T-cell (primary cell): ENCODE measurements at regions of chr14 and their contacts with region 1.

Region 1: GRCh38 chr14:81990312-81990761 is 456.7 kb upstream of the SEL1L start:
- DNase-seq: peak in 11 of 35 experiments; percentile 1 to 51 (median 9)
- ATAC-seq: no peak
- H3K4me3 ChIP-seq: no peak overlapping the region
- H3K4me3 Mint-ChIP-seq: no peak overlapping the region
- H3K27ac ChIP-seq: no peak overlapping the region
- H3K27ac Mint-ChIP-seq: no peak overlapping the region
- H3K4me1 ChIP-seq: no peaks in the 10 kb centered on the region
- H3K4me1 Mint-ChIP-seq: no peaks in the 10 kb centered on the region
- H3K27me3 ChIP-seq: no peaks in the 10 kb centered on the region
- H3K27me3 Mint-ChIP-seq: peaks cover 0 to 3% of the 10 kb centered on the region in 2 donors

Region 2: GRCh38 chr14:82075566-82075965 is 85.2 kb after region 1 on chr14:
- CTCF ChIA-PET with region 1: interaction called in 1 of 2 experiments, 11 read pairs
- POLR2A ChIA-PET with region 1: no interaction called
- DNase-seq: peak in 1 of 35 experiments; percentile 1
- ATAC-seq: no peak
- H3K4me3 ChIP-seq: no peak overlapping the region
- H3K4me3 Mint-ChIP-seq: no peak overlapping the region
- H3K27ac ChIP-seq: no peak overlapping the region
- H3K27ac Mint-ChIP-seq: no peak overlapping the region
- H3K4me1 ChIP-seq: no peaks in the 10 kb centered on the region
- H3K4me1 Mint-ChIP-seq: no peaks in the 10 kb centered on the region
- H3K27me3 ChIP-seq: no peaks in the 10 kb centered on the region
- H3K27me3 Mint-ChIP-seq: no peaks in the 10 kb centered on the region